ENCODE measurements at regions of chr2 and their contacts with region 1.

Region 1: GRCh38 chr2:62410015-62410453 is 96.0 kb downstream of the TMEM17 start:
- DNase-seq: peak in 1 of 4 experiments; percentile 29
- ATAC-seq: peak; percentile 66
- H3K4me3 ChIP-seq: no peak overlapping the region
- H3K27ac ChIP-seq: no peak overlapping the region
- H3K4me1 ChIP-seq: peaks cover 3 to 9% of the 10 kb centered on the region in 2 experiments; a peak in 3 of 5 replicates
- H3K27me3 ChIP-seq: no peaks in the 10 kb centered on the region
- CTCF ChIP-seq: peak; percentile 35 to 57 (median 53); a peak in 5 of 6 replicates
- EP300 ChIP-seq: no peak
- POLR2A ChIP-seq: no peak
- RAD21 ChIP-seq: peak; percentile 63 to 72

Region 2: DNA sequence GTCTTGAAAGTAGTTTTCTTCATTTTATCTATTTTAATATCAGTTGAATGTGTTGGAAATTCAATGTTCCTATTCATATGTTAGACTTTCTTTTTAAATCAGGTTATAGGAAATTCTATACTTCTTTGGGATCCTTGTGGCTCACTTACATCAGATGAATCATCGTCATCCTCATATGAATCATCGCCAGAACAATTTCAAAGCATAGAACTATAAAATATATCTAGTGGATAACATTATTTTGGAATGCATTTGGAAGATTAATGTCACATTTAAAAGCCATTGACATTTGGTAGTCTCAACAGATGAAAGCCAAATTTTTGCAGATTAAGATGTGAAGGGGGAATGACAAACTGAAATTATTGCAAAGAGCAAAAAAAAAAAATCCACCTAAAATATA is 650.3 kb before region 1 on chr2:
- CTCF ChIA-PET with region 1: no interaction called
- POLR2A ChIA-PET with region 1: no interaction called
- in situ Hi-C with region 1: no loop called
- intact Hi-C with region 1: no loop called
- DNase-seq: no peak
- ATAC-seq: no peak
- H3K4me3 ChIP-seq: no peak overlapping the region
- H3K27ac ChIP-seq: no peak overlapping the region
- H3K4me1 ChIP-seq: peaks cover 0 to 10% of the 10 kb centered on the region in 2 experiments; a peak in 2 of 5 replicates
- H3K27me3 ChIP-seq: no peaks in the 10 kb centered on the region
- CTCF ChIP-seq: no peak
- EP300 ChIP-seq: no peak
- POLR2A ChIP-seq: no peak
- RAD21 ChIP-seq: no peak

Region 3: DNA sequence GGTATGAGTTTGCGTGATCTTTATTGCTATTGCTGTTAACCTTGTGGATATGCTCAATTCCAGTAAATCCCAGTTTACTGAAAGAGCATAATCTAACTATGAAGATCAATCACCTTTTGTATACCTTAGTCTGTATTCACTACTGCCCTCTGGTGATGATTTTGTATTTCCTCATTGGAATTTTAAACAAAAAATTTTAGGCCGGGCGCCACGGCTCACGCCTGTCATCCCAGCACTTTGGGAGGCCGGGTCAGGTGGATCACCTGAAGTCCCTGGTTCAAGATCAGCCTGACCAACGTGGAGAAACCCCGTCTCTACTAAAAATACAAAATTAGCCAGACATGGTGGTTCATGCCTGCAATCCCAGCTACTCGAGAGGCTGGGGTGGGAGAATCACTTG is 499.4 kb before region 1 on chr2:
- CTCF ChIA-PET with region 1: no interaction called
- POLR2A ChIA-PET with region 1: no interaction called
- in situ Hi-C with region 1: loop called (anchors 5 kb)
- intact Hi-C with region 1: no loop called
- DNase-seq: no peak
- ATAC-seq: peak; percentile 36; the same call in 1 of the 3 replicates
- H3K4me3 ChIP-seq: no peak overlapping the region
- H3K27ac ChIP-seq: no peak overlapping the region
- H3K4me1 ChIP-seq: peaks cover 0 to under 1% of the 10 kb centered on the region in 2 experiments; a peak in 1 of 5 replicates
- H3K27me3 ChIP-seq: no peaks in the 10 kb centered on the region
- CTCF ChIP-seq: peak; percentile 8 to 44 (median 40); a peak in 4 of 6 replicates
- EP300 ChIP-seq: no peak
- POLR2A ChIP-seq: no peak
- RAD21 ChIP-seq: peak in 1 of 2 experiments; percentile 32; a peak in 1 of 4 replicates

Region 4: GRCh38 chr2:61924895-61925663 is 485.0 kb before region 1 on chr2:
- CTCF ChIA-PET with region 1: interaction called, 37 read pairs
- POLR2A ChIA-PET with region 1: no interaction called
- in situ Hi-C with region 1: no loop called
- intact Hi-C with region 1: no loop called
- DNase-seq: peak in 1 of 4 experiments; percentile 13
- ATAC-seq: peak; percentile 75
- H3K4me3 ChIP-seq: no peak overlapping the region
- H3K27ac ChIP-seq: no peak overlapping the region
- H3K4me1 ChIP-seq: peaks cover 2 to 17% of the 10 kb centered on the region in 2 experiments; a peak in 3 of 5 replicates
- H3K27me3 ChIP-seq: no peaks in the 10 kb centered on the region
- CTCF ChIP-seq: 0 out of 6 replicates have a peak, but pooled peaks of 1 of the 3 experiments have one; percentile 27
- EP300 ChIP-seq: no peak
- POLR2A ChIP-seq: no peak
- RAD21 ChIP-seq: no peak

Region 5: DNA sequence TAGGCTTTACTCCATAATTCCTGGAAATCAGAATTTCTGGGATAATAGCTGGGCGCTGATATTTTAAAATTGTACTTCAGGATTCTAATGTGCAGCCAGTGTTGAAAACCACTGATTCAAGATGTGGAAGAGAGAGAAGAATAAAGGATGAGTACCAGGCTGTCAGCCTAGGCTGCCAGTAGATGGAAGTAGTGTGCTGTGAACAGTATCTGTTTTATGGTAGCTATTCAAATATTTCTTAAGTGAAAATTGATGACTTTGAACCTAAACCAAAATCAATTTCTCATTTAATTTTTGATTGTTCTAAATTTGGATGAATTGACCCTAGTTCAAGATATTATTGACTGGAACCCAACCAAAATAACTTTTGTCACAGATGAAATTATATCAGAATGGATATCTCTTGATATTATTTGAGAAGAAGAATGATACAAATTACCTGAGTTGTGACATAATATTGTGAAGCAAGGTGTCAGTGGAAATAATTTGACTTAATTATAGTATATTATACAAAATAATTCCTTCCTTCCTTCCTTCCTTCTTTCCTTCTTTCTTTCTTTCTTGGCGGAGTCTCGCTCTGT is 416.5 kb before region 1 on chr2:
- CTCF ChIA-PET with region 1: interaction called, 28 read pairs
- POLR2A ChIA-PET with region 1: interaction called, 3 read pairs
- in situ Hi-C with region 1: loop called (anchors 5 kb)
- intact Hi-C with region 1: loop called (anchors 1 kb)
- DNase-seq: peak; percentile 26 to 68 (median 41)
- ATAC-seq: peak; percentile 87
- H3K4me3 ChIP-seq: no peak overlapping the region
- H3K27ac ChIP-seq: no peak overlapping the region
- H3K4me1 ChIP-seq: peaks cover 0 to 12% of the 10 kb centered on the region in 2 experiments; a peak in 3 of 5 replicates
- H3K27me3 ChIP-seq: no peaks in the 10 kb centered on the region
- CTCF ChIP-seq: peak; percentile 55 to 91 (median 71); a peak in 5 of 6 replicates
- EP300 ChIP-seq: no peak
- POLR2A ChIP-seq: no peak
- RAD21 ChIP-seq: peak; percentile 91 to 94

Region 6: GRCh38 chr2:62112179-62112578 is 297.9 kb before region 1 on chr2:
- CTCF ChIA-PET with region 1: no interaction called
- POLR2A ChIA-PET with region 1: no interaction called
- in situ Hi-C with region 1: no loop called
- intact Hi-C with region 1: no loop called
- DNase-seq: no peak
- ATAC-seq: no peak
- H3K4me3 ChIP-seq: no peak overlapping the region
- H3K27ac ChIP-seq: no peak overlapping the region
- H3K4me1 ChIP-seq: peaks cover 0 to 3% of the 10 kb centered on the region in 2 experiments; a peak in 2 of 5 replicates
- H3K27me3 ChIP-seq: no peaks in the 10 kb centered on the region
- CTCF ChIP-seq: no peak
- EP300 ChIP-seq: no peak
- POLR2A ChIP-seq: no peak
- RAD21 ChIP-seq: no peak

Region 7: GRCh38 chr2:62297624-62298010 is 112.4 kb before region 1 on chr2:
- CTCF ChIA-PET with region 1: no interaction called
- POLR2A ChIA-PET with region 1: no interaction called
- in situ Hi-C with region 1: loop called (anchors 5 kb)
- intact Hi-C with region 1: loop called (anchors 1 kb)
- DNase-seq: peak; percentile 57 to 86 (median 67)
- ATAC-seq: peak; percentile 77
- H3K4me3 ChIP-seq: peak overlapping the region; percentile 41
- H3K27ac ChIP-seq: peak overlapping the region; percentile 89
- H3K4me1 ChIP-seq: peaks cover 37 to 61% of the 10 kb centered on the region in 2 experiments; a peak in 4 of 5 replicates
- H3K27me3 ChIP-seq: no peaks in the 10 kb centered on the region
- CTCF ChIP-seq: peak; percentile 70 to 86 (median 85)
- EP300 ChIP-seq: no peak
- POLR2A ChIP-seq: no peak
- RAD21 ChIP-seq: peak; percentile 68 to 76

Region 8: GRCh38 chr2:62343636-62344337 is 66.2 kb before region 1 on chr2:
- CTCF ChIA-PET with region 1: no interaction called
- POLR2A ChIA-PET with region 1: no interaction called
- in situ Hi-C with region 1: no loop called
- intact Hi-C with region 1: loop called (anchors 2 kb)
- DNase-seq: peak in 1 of 4 experiments; percentile 43
- ATAC-seq: peak; percentile 46
- H3K4me3 ChIP-seq: no peak overlapping the region
- H3K27ac ChIP-seq: peak overlapping the region; percentile 65
- H3K4me1 ChIP-seq: peaks cover 14 to 15% of the 10 kb centered on the region in 2 experiments
- H3K27me3 ChIP-seq: no peaks in the 10 kb centered on the region
- CTCF ChIP-seq: no peak
- EP300 ChIP-seq: no peak
- POLR2A ChIP-seq: no peak
- RAD21 ChIP-seq: no peak

Measured in K562 (cell line).